Activated naive CD4-positive, alpha-beta T cell treated with anti-CD3 and anti-CD28 coated beads for 36 hours (primary cell): ENCODE measurements at regions of chr18 and their contacts with region 1.

Region 1: GRCh38 chr18:13375302-13376255 is 157.0 kb downstream of the LDLRAD4 start:
- DNase-seq: peak; percentile 93
- H3K4me3 Mint-ChIP-seq: peak overlapping the region; percentile 32
- H3K27ac Mint-ChIP-seq: peak overlapping the region; percentile 86
- H3K4me1 Mint-ChIP-seq: peaks cover 81% of the 10 kb centered on the region
- H3K27me3 Mint-ChIP-seq: no peaks in the 10 kb centered on the region

Region 2: DNA sequence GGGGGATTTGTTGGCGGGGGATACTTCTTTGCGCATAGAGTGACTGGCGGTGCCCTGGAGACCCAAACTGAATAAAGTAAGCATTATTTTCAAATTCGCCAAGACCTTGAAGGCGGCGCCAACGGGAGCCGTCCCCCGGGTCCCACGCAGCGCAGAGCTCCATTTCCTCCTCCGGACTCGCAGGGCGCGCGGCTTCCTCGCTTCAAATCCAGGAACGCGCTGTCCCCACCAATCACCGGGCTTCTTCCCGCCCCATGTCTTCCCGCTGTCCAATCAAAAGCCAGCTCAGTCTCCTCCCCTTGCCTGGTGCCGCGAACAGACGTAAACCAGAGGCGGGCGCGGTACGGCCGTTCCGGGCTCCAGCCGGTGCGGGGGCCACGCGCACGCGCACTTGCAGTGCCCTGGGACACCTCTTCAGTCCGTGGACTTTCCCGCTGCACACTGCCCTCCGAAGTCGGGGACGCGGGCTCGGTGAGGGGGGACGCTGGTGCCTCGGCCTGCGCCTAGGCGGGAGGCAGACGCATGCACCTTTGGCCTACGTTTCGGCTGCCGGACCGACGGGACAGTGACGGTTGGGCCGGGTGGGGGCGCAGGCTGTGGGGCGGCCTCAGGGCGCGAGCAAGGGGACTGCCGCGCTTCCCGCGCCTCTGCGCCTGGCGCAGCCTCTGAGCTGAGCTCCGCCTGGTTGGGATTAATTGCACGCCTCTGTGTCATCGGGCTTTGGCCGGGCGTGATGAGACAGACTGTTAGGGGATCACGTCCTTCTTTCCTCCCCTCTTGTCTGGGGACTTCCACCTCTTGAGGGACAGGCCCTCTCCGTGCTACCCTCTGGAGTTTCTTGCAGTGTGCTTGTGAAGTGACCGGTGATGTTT is 384.4 kb before region 1 on chr18 and contains the start of gene CEP192:
- CTCF ChIA-PET with region 1: no interaction called
- intact Hi-C with region 1: loop called (anchors 2 kb)
- DNase-seq: peak; percentile 99
- H3K4me3 Mint-ChIP-seq: peak within 1 kb of the TSS; percentile 99
- H3K27ac Mint-ChIP-seq: peak within 1 kb of the TSS; percentile 97
- H3K4me1 Mint-ChIP-seq: peaks cover 10% of the 10 kb centered on the region
- H3K27me3 Mint-ChIP-seq: no peaks in the 10 kb centered on the region
- total RNA-seq, gene CEP192: 32.7 to 33.6 TPM

Region 3: GRCh38 chr18:13289481-13290205 is 85.9 kb before region 1 on chr18:
- CTCF ChIA-PET with region 1: no interaction called
- intact Hi-C with region 1: loop called (anchors 5 kb)
- DNase-seq: no peak
- H3K4me3 Mint-ChIP-seq: no peak overlapping the region
- H3K27ac Mint-ChIP-seq: no peak overlapping the region
- H3K4me1 Mint-ChIP-seq: peaks cover 24% of the 10 kb centered on the region
- H3K27me3 Mint-ChIP-seq: no peaks in the 10 kb centered on the region

Region 4: DNA sequence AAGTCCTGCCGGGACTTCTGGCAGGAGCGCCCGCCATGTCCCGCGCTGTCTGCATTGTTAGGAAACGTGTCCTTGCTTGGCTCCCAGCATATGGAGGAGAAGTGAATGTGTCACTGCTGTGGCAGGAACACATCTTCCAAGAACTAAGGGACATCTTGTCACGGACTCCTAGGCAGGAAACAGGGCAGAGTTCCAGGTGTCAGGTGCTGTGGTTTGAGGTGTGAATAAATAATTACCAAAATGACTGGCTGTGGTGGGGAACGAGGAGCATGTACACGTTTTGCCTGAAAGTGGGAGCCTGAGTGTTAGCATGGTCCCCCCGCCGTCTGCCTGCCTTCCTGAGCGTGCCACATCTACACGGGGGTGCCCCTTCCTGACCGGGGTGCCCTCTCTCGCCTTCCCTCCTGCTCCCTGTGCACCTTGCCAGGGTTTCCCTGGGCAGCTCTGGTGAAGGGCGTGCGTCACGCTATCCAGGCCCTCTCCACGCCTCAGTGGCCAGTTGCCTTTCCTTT is 80.4 kb after region 1 on chr18:
- CTCF ChIA-PET with region 1: interaction called, 3 read pairs
- intact Hi-C with region 1: loop called (anchors 1 kb)
- DNase-seq: peak; percentile 85
- H3K4me3 Mint-ChIP-seq: peak overlapping the region; percentile 33
- H3K27ac Mint-ChIP-seq: no peak overlapping the region
- H3K4me1 Mint-ChIP-seq: peaks cover 25% of the 10 kb centered on the region
- H3K27me3 Mint-ChIP-seq: no peaks in the 10 kb centered on the region

Region 5: DNA sequence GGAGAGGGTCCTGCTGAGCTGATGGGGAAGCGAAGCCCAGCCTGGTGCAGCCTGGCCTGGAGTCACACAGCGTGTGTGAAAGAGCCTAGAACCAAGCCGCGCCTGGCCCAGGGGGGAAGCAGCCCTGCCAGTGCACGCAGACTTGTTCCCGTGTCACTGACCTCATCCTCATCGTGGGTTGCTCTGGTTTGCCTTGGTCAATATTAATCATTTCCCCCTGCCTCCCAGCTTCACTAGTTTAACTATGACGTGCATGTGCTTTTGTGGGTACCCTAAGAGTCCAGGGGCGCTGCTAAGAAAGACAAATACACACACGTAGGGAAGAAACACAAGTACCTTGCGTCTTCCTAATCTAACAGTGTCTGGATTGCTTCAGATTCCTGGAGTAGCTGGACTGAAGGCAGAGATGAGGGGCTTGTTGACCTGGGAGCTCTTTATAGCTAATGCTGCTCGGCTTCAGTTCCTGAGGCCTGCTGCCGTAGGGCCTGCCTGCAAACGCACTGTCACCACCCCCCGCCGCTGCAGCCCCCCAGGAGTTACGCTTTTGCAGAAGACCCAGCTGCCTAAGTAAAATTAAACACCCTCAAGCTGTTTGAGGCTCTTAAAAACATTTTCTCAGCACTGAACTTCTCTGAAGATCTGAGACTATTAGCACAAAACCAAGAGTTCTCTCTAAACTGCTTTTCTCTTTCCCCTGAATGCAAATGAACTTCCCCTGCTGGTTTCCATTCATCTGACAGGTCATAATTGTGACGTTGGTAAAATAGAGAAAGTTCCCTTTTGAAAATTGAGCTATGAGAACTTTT is 191.6 kb after region 1 on chr18:
- CTCF ChIA-PET with region 1: no interaction called
- intact Hi-C with region 1: loop called (anchors 2 kb)
- DNase-seq: no peak
- H3K4me3 Mint-ChIP-seq: peak overlapping the region; percentile 7
- H3K27ac Mint-ChIP-seq: peak overlapping the region; percentile 68
- H3K4me1 Mint-ChIP-seq: peaks cover 68% of the 10 kb centered on the region
- H3K27me3 Mint-ChIP-seq: no peaks in the 10 kb centered on the region

Region 6: GRCh38 chr18:13611601-13612195 is 236.1 kb after region 1 on chr18:
- CTCF ChIA-PET with region 1: no interaction called
- intact Hi-C with region 1: loop called (anchors 1 kb)
- DNase-seq: peak; percentile 26
- H3K4me3 Mint-ChIP-seq: peak overlapping the region; percentile 71
- H3K27ac Mint-ChIP-seq: no peak overlapping the region
- H3K4me1 Mint-ChIP-seq: peaks cover 74% of the 10 kb centered on the region
- H3K27me3 Mint-ChIP-seq: no peaks in the 10 kb centered on the region